Endothelial cell of umbilical vein (primary cell): ENCODE measurements at regions of chr12 and their contacts with region 1.

Region 1: DNA sequence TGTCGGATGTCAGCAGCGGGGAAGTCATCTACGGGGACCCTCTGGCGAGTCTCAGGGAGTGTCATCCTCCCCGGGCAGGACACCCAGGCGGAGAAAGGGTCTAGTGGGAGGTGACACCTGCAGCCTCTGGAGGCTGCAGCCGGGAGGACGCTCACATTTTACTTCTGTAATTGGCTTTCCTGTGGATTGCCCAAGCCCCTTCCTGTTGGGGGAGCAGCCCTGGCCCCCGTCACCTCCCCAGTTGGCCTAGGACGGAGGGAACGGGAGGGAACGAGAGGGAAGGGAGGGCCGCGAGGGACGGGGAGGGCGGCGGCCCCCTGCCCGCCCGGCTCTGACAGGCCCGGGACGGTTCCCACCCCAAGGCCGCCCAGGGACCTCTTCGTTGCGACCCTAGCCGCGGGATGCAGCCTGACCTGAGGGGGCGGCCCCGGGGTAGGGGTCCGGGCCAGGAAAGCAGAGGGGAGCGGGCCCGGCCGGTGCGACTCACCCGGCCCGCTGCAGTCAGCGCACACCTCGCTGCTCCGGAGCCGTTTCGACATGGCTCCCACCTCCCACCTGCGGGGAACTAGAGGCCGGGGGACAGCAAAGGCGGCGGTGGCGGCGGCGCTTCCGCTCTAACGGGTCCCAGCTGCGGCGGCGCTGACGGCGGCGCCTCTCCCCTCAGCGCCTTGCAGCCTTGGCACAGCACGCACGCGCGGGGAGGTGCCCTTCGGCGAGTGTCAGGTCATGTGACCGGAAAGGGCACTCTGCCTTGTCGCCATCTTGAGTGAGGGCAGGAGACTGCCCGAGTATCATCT is at the start of gene GIT2:
- DNase-seq: peak; percentile 89
- H3K4me3 ChIP-seq: peak within 1 kb of the TSS; percentile 88 to 100 (median 89)
- H3K27ac ChIP-seq: peak within 1 kb of the TSS; percentile 67
- H3K4me1 ChIP-seq: peaks cover 37% of the 10 kb centered on the region
- H3K27me3 ChIP-seq: no peaks in the 10 kb centered on the region
- CTCF ChIP-seq: no peak
- POLR2A ChIP-seq: peak; percentile 87
- total RNA-seq, gene GIT2: 67.7 and 77.2 TPM in 2 replicates

Region 2: GRCh38 chr12:109944561-109945359 is 51.1 kb before region 1 on chr12:
- CTCF ChIA-PET with region 1: no interaction called
- POLR2A ChIA-PET with region 1: no interaction called
- dilution Hi-C with region 1: no loop called
- intact Hi-C with region 1: loop called (anchors 5 kb)
- DNase-seq: peak; percentile 74
- H3K4me3 ChIP-seq: no peak overlapping the region
- H3K27ac ChIP-seq: peak overlapping the region; percentile 62
- H3K4me1 ChIP-seq: peaks cover 28% of the 10 kb centered on the region
- H3K27me3 ChIP-seq: no peaks in the 10 kb centered on the region
- CTCF ChIP-seq: no peak
- POLR2A ChIP-seq: no peak

Region 3: DNA sequence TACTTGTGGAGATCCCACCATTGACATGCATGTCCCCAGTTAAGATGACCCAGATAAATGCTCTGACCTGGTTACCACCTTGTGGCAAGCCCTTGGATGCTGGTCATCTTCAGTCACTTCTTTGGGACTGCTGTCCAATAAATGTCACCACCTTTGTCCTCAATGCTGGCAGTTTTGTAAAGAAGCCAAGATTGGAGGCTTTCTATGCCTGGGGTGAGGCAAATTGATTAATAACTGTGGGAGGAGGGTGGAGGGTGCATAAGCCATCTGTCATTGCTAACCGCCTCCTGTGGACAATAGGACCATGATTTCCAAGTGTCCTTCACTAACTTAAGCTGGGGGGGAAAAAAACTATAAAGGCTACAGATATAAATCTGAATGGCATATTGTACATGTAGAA is 27.7 kb after region 1 on chr12:
- CTCF ChIA-PET with region 1: interaction called, 5 read pairs
- POLR2A ChIA-PET with region 1: no interaction called
- dilution Hi-C with region 1: no loop called
- intact Hi-C with region 1: loop called (anchors 1 kb)
- DNase-seq: no peak
- H3K4me3 ChIP-seq: no peak overlapping the region
- H3K27ac ChIP-seq: peak overlapping the region; percentile 32
- H3K4me1 ChIP-seq: peaks cover 28% of the 10 kb centered on the region
- H3K27me3 ChIP-seq: no peaks in the 10 kb centered on the region
- CTCF ChIP-seq: no peak
- POLR2A ChIP-seq: no peak

Region 4: DNA sequence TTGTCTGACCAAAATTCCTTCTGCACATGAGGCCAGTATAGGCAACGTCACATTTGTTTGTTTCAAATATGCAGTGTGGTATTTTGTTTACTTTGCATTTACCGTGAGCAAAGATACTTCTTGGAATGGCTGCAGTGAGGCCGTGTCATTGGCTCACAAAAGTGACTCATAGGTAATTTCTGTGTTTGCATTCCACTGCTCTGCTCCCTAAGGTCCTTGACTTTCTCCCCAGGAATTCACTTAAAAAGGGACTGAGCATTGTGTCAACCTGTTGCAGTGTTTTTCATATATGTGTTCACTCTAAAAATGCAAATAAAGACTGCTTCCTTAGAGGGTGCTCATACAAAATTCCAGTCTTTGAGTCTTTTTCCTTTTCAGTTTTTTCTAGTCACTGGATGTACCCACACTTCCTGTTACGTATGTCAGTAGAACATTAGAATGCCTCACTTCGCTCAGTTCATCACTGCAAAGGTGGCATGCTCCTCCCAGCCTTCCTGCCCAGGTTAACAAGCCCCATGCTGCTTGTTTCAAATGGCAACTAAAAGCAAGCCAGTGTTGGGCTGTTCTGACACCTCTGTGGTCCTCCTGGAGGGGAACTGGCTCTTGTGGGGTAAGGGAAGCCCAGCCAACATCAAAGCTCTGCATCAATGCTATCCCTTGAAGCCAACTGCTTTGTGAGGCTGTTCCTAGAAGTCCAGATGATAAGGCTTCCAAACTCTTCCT is 43.4 kb after region 1 on chr12:
- CTCF ChIA-PET with region 1: no interaction called
- POLR2A ChIA-PET with region 1: no interaction called
- dilution Hi-C with region 1: no loop called
- intact Hi-C with region 1: loop called (anchors 1 kb)
- DNase-seq: peak; percentile 74
- H3K4me3 ChIP-seq: no peak overlapping the region
- H3K27ac ChIP-seq: peak overlapping the region; percentile 90
- H3K4me1 ChIP-seq: peaks cover 29% of the 10 kb centered on the region
- H3K27me3 ChIP-seq: no peaks in the 10 kb centered on the region
- CTCF ChIP-seq: no peak
- POLR2A ChIP-seq: no peak

Region 5: GRCh38 chr12:110048242-110049027 is 52.6 kb after region 1 on chr12 and contains the start of gene C12orf76:
- CTCF ChIA-PET with region 1: no interaction called
- POLR2A ChIA-PET with region 1: no interaction called
- dilution Hi-C with region 1: no loop called
- intact Hi-C with region 1: loop called (anchors 1 kb)
- DNase-seq: peak; percentile 95
- H3K4me3 ChIP-seq: peak within 1 kb of the TSS; percentile 55 to 87 (median 61)
- H3K27ac ChIP-seq: peak within 1 kb of the TSS; percentile 33
- H3K4me1 ChIP-seq: peaks cover 10% of the 10 kb centered on the region
- H3K27me3 ChIP-seq: no peaks in the 10 kb centered on the region
- CTCF ChIP-seq: no peak
- POLR2A ChIP-seq: peak; percentile 96
- total RNA-seq, gene C12orf76: 11.9 and 13.4 TPM in 2 replicates